Pancreas (tissue), 10 donors: ENCODE measurements at regions of chr12 and their contacts with region 1.

Region 1: GRCh38 chr12:3885277-3886094 is 12.3 kb upstream of the PARP11 start:
- DNase-seq: peak in 1 of 6 donors; percentile 26
- ATAC-seq: peak in 3 of 4 donors; percentile 55 to 79 (median 72)
- H3K4me3 ChIP-seq: no peak overlapping the region
- H3K27ac ChIP-seq: no peak overlapping the region
- H3K4me1 ChIP-seq: no peaks in the 10 kb centered on the region
- H3K27me3 ChIP-seq: no peaks in the 10 kb centered on the region
- CTCF ChIP-seq: peak; percentile 42 to 67 (median 52)

Region 2: DNA sequence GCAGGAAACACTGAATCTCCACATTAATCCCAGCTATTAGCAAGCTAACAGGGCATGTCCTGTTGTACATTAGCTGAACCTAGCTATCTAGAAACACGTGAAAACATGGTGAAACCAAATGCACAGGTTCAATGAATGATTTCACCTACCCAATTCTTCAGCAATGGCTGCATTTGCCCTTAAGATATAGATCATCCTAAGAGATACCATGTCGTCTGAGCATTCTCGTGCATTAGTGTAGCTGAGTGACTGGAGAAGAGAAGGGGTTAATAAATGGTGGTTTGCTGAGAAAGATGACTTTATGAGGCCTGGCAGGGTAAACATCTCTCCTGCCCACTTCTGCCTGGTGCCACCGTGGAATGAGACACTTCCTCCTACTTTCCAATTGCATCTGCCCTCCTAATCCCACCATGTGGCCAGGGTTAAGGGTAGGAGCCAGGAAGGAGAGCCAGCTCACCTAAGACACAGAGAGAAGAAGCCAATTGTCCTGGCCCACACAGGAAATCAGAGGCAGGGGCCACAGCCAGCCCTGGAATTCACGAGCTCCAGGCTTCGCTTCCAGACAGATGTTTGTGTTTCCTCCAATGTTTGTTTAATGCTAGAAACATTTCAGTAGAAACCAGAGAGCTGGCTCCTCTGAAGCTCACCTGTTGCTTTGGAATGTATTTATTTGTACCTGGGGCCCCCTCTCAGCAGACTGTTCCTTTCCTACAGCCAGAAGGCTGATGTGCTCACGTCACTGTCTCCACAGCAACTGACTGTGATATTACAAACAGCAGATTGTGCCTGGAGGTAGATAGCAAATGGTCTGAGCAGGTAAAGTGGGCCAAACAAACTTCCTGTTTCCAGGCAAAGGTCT is 113.7 kb after region 1 on chr12:
- intact Hi-C with region 1: loop called in 1 of 3 experiments (anchors 10 kb)
- DNase-seq: peak in 4 of 6 donors; percentile 79 to 92 (median 88)
- ATAC-seq: peak; percentile 89 to 94 (median 94)
- H3K4me3 ChIP-seq: peak overlapping the region in 1 of 4 donors; percentile 1
- H3K27ac ChIP-seq: peak overlapping the region; percentile 79 to 90 (median 86)
- H3K4me1 ChIP-seq: peaks cover 6 to 35% (median 25%) of the 10 kb centered on the region in 3 donors
- H3K27me3 ChIP-seq: no peaks in the 10 kb centered on the region
- CTCF ChIP-seq: no peak

Region 3: DNA sequence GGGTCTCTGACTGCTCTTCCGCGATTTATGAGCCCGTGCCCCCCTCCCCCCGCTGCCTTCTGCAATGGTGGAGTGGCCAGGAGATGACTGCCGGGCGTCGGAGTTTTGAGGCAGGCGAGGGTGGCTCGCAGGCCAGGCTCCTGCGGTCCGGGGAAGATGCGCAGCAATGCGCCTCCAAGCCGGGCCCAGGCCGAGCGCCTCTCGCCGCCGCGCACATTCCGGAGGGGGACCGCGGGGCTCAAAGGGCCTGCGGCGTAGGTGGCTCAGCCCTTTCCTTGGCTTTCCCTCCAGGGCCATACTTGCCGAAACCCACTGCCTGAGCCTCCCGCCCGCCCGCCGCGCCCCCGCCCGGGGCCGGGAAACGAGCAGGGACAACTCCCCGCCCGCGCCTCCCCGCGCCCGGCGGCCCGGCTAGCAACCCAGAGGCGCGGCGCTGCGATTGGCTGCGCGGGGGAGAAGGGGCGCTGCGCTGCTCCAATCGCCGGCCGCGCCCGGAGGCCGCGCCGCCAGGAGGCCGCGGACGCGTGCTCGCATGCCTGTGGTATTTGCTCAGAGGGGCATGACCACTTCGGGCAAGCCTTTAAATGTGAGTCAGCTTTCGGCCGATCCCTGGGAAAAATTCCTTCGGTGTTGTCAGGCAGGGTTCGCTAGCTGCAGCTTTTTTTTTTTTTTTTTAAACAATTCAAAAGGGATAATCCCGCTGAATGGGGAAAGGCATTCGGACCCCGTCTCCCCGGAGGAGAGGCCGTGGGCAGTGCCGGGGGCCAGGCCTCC is 145.6 kb after region 1 on chr12:
- intact Hi-C with region 1: loop called in 2 of 3 experiments (anchors 5 to 10 kb)
- DNase-seq: peak; percentile 92 to 95 (median 94)
- ATAC-seq: peak; percentile 94 to 98 (median 97)
- H3K4me3 ChIP-seq: peak overlapping the region; percentile 12 to 50 (median 36)
- H3K27ac ChIP-seq: peak overlapping the region; percentile 66 to 87 (median 83)
- H3K4me1 ChIP-seq: peaks cover 0 to 33% (median 7%) of the 10 kb centered on the region in 3 donors
- H3K27me3 ChIP-seq: no peaks in the 10 kb centered on the region
- CTCF ChIP-seq: no peak

Region 4: DNA sequence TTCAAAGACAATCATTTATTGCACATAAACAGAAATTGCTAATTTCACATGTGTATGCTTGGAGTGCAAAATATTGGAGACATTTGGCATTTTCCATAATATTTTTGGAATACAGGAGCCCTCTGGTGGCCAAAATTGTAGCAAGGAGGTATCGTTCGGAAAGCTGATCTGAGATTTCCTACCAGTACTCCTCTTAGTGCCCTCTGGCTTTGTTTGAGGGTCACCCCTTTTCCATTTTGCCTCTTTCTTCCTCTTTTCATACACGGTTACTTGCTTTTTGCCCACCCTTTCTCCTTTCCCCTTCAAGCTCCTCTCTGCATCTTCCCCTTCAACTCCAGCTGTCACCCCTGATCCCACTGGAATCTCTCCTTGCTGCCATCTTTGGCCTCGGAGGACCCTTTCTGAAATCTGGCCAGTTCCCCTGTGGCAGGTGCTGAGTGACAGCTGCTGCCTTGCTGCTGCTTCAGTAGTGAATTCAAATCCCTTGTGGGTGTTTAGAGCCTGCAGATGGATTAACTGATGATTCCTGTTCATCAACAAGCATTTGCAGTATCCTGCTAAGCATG is 152.3 kb after region 1 on chr12:
- intact Hi-C with region 1: loop called (anchors 5 to 10 kb)
- DNase-seq: peak in 2 of 6 donors; percentile 44 to 75
- ATAC-seq: peak; percentile 70 to 80 (median 71)
- H3K4me3 ChIP-seq: no peak overlapping the region
- H3K27ac ChIP-seq: no peak overlapping the region
- H3K4me1 ChIP-seq: no peaks in the 10 kb centered on the region
- H3K27me3 ChIP-seq: no peaks in the 10 kb centered on the region
- CTCF ChIP-seq: peak; percentile 48 to 71 (median 64)

Region 5: GRCh38 chr12:4044736-4045730 is 159.5 kb after region 1 on chr12:
- intact Hi-C with region 1: loop called in 1 of 3 experiments (anchors 10 kb)
- DNase-seq: no peak
- ATAC-seq: no peak
- H3K4me3 ChIP-seq: no peak overlapping the region
- H3K27ac ChIP-seq: no peak overlapping the region
- H3K4me1 ChIP-seq: no peaks in the 10 kb centered on the region
- H3K27me3 ChIP-seq: no peaks in the 10 kb centered on the region
- CTCF ChIP-seq: no peak

Region 6: DNA sequence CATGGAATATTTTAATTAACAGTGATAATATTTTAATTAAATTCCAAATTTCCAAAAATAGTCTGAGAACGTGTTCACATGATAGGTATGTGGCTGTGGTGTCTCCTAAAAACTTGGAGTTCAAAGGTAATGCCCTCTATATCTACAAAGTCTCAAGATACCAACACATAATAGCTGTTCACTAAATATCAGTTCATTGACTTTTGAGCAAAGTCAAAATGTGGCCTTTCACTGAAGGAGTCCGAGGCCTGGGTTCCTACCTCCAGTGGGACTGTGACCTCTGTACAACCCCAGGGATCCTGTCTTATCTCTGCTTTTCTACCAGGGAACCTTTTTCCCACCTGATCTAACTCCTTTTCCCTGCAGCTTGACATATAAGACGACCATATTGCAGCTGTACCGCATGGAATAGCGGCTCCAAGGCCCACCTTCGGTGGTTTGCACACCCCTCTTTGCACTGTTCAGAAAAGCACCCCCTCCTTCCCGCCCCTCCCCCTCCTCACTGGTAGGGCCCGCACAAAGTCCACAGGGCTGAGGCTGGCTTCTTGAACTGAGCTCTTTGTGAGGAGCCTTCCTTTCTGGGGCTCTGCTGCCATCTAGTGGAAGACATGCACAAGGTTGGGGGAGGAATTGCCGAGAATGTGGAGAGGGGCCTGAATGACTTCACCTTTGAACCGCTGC is 391.2 kb after region 1 on chr12:
- intact Hi-C with region 1: loop called in 1 of 3 experiments (anchors 10 kb)
- DNase-seq: peak; percentile 78 to 92 (median 85)
- ATAC-seq: peak; percentile 58 to 70 (median 66)
- H3K4me3 ChIP-seq: peak overlapping the region in 2 of 4 donors; percentile 66 to 81
- H3K27ac ChIP-seq: no peak overlapping the region
- H3K4me1 ChIP-seq: peaks cover 14 to 25% (median 16%) of the 10 kb centered on the region in 3 donors
- H3K27me3 ChIP-seq: no peaks in the 10 kb centered on the region
- CTCF ChIP-seq: peak; percentile 82 to 88 (median 85)